PC-9 (cell line): ENCODE measurements at regions of chr15 and their contacts with region 1.

Region 1: GRCh38 chr15:68924866-68925560 is 5.3 kb upstream of the SPESP1 start:
- DNase-seq: peak; percentile 48 to 77
- H3K4me3 ChIP-seq: no peak overlapping the region
- H3K27ac ChIP-seq: no peak overlapping the region
- H3K4me1 ChIP-seq: no peaks in the 10 kb centered on the region
- H3K27me3 ChIP-seq: no peaks in the 10 kb centered on the region
- CTCF ChIP-seq: peak; percentile 86

Region 2: GRCh38 chr15:68679961-68680371 is 245.0 kb before region 1 on chr15:
- CTCF ChIA-PET with region 1: no interaction called
- POLR2A ChIA-PET with region 1: no interaction called
- intact Hi-C with region 1: no loop called
- DNase-seq: no peak
- H3K4me3 ChIP-seq: no peak overlapping the region
- H3K27ac ChIP-seq: no peak overlapping the region
- H3K4me1 ChIP-seq: no peaks in the 10 kb centered on the region
- H3K27me3 ChIP-seq: no peaks in the 10 kb centered on the region
- CTCF ChIP-seq: no peak

Region 3: DNA sequence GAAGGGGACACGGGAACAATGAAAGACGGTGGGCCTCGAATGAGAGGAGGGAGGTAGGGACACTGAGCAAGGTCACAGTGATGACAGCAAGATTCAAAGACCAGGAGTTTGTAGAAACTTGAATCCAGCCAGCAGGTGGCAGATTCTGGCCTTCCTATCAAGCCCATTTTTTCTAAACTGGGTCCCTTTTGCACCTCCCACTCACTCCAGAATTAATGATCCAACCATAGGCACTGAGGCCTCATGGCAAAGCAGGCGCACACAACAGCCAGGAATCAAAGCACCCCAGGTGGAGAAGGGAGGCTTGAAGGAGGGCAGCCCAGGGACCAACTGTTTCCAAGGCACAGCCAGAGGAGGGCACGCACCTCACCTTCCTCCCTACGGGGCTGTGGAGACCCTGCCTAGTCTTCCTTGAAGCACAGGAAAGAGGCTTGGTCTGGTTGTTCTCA is 194.5 kb before region 1 on chr15:
- CTCF ChIA-PET with region 1: interaction called, 3 read pairs
- POLR2A ChIA-PET with region 1: no interaction called
- intact Hi-C with region 1: loop called (anchors 1 kb)
- DNase-seq: peak in 1 of 2 experiments; percentile 21
- H3K4me3 ChIP-seq: no peak overlapping the region
- H3K27ac ChIP-seq: no peak overlapping the region
- H3K4me1 ChIP-seq: no peaks in the 10 kb centered on the region
- H3K27me3 ChIP-seq: no peaks in the 10 kb centered on the region
- CTCF ChIP-seq: peak; percentile 57

Region 4: GRCh38 chr15:68885070-68885469 is 39.9 kb before region 1 on chr15:
- CTCF ChIA-PET with region 1: interaction called, 14 read pairs
- POLR2A ChIA-PET with region 1: no interaction called
- intact Hi-C with region 1: no loop called
- DNase-seq: peak; percentile 73 to 84
- H3K4me3 ChIP-seq: no peak overlapping the region; the same call in 1 of the 2 replicates
- H3K27ac ChIP-seq: peak overlapping the region; percentile 44
- H3K4me1 ChIP-seq: peaks cover 25% of the 10 kb centered on the region
- H3K27me3 ChIP-seq: no peaks in the 10 kb centered on the region
- CTCF ChIP-seq: no peak